ENCODE measurements at regions of chr13 and their contacts with region 1.

Region 1: GRCh38 chr13:53920916-53921315 is 892.3 kb downstream of the OLFM4 start:
- DNase-seq: no peak
- ATAC-seq: no peak
- H3K4me3 ChIP-seq: no peak overlapping the region
- H3K27ac ChIP-seq: no peak overlapping the region
- H3K4me1 ChIP-seq: no peaks in the 10 kb centered on the region
- H3K27me3 ChIP-seq: no peaks in the 10 kb centered on the region
- CTCF ChIP-seq: no peak

Region 2: GRCh38 chr13:53683608-53684007 is 237.3 kb before region 1 on chr13:
- intact Hi-C with region 1: no loop called
- DNase-seq: no peak
- ATAC-seq: no peak
- H3K4me3 ChIP-seq: no peak overlapping the region
- H3K27ac ChIP-seq: no peak overlapping the region
- H3K4me1 ChIP-seq: no peaks in the 10 kb centered on the region
- H3K27me3 ChIP-seq: no peaks in the 10 kb centered on the region
- CTCF ChIP-seq: no peak

Region 3: DNA sequence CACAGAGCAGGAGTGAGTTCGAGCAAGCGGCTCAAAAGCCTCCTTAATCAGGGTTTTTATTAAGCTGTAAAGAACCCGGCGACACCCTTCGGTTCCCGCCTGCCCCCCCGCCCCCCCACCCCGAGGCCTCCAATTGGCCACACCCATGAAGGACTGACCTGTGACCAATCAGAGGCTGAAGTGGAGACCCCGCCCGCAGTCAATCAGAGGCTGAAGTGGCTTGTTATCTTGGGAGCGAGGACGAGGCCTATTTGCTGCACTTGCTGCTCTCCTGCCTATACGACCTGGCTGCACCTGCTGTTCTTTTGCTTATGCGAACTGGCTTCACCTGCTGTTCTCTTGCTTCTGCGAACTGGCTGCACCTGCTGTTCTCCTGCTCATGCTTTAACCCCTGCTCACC is 47.4 kb before region 1 on chr13:
- intact Hi-C with region 1: loop called in 1 of 10 experiments (anchors 5 kb)
- DNase-seq: no peak
- ATAC-seq: no peak
- H3K4me3 ChIP-seq: no peak overlapping the region
- H3K27ac ChIP-seq: no peak overlapping the region
- H3K4me1 ChIP-seq: no peaks in the 10 kb centered on the region
- H3K27me3 ChIP-seq: no peaks in the 10 kb centered on the region
- CTCF ChIP-seq: no peak

Measured in heart right ventricle (tissue), 16 donors.